Thyroid gland (tissue), 4 donors: ENCODE measurements at regions of chrX and their contacts with region 1.

Region 1: DNA sequence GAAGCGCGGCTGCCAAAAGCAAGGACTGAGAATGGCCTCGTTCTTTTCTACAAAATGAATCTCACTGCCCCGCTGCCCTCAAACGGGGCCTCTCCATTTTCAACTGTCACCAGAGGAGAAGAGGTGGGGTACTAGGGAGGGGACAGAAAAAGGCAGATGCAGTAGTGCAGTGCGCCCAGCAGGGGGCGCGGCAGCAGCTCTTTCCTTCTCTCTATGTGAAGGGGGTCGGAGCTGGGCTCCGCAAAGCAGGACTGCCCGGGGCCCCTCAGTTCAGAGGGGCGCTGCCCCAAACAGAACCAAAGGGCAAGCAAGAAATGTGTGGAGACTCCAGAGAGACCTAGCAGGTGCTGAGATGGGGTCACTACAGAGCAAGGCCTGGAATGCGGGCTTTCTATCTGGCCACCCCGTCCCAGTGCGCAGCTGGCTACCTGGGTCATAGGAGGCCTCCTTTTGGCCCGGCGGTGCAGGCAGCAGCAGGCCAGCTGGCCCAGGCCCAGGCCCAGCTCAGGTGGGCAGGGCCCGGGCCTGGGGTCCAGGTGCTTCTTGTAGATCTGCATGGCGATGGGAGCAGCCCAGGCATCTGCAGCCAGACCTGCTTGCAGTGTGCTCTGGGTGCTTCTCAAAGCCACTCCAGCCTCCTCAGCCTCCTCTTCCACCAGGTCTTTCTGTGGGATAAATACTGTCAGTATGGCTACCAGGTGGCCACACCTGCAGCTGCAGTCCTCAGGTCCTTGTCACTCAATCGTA is 5.9 kb downstream of the IRAK1 start:
- DNase-seq: no peak
- H3K4me3 ChIP-seq: no peak overlapping the region
- H3K27ac ChIP-seq: no peak overlapping the region
- H3K4me1 ChIP-seq: peaks cover 4 to 9% of the 10 kb centered on the region in 2 donors
- H3K27me3 ChIP-seq: no peaks in the 10 kb centered on the region
- CTCF ChIP-seq: peak; percentile 53 to 85 (median 68)
- POLR2A ChIP-seq: no peak

Region 2: GRCh38 chrX:153782313-153782712 is 231.5 kb before region 1 on chrX:
- intact Hi-C with region 1: no loop called
- DNase-seq: no peak
- H3K4me3 ChIP-seq: no peak overlapping the region
- H3K27ac ChIP-seq: no peak overlapping the region
- H3K4me1 ChIP-seq: no peaks in the 10 kb centered on the region
- H3K27me3 ChIP-seq: no peaks in the 10 kb centered on the region
- CTCF ChIP-seq: no peak
- POLR2A ChIP-seq: no peak

Region 3: GRCh38 chrX:154051201-154051810 is 37.5 kb after region 1 on chrX:
- intact Hi-C with region 1: loop called (anchors 5 kb)
- DNase-seq: peak; percentile 77 to 81
- H3K4me3 ChIP-seq: no peak overlapping the region
- H3K27ac ChIP-seq: no peak overlapping the region
- H3K4me1 ChIP-seq: peaks cover 33 to 40% of the 10 kb centered on the region in 2 donors
- H3K27me3 ChIP-seq: no peaks in the 10 kb centered on the region
- CTCF ChIP-seq: peak; percentile 32 to 61 (median 52)
- POLR2A ChIP-seq: peak in 1 of 2 donors; percentile 3